ENCODE measurements at regions of chr2 and their contacts with region 1.

Region 1: DNA sequence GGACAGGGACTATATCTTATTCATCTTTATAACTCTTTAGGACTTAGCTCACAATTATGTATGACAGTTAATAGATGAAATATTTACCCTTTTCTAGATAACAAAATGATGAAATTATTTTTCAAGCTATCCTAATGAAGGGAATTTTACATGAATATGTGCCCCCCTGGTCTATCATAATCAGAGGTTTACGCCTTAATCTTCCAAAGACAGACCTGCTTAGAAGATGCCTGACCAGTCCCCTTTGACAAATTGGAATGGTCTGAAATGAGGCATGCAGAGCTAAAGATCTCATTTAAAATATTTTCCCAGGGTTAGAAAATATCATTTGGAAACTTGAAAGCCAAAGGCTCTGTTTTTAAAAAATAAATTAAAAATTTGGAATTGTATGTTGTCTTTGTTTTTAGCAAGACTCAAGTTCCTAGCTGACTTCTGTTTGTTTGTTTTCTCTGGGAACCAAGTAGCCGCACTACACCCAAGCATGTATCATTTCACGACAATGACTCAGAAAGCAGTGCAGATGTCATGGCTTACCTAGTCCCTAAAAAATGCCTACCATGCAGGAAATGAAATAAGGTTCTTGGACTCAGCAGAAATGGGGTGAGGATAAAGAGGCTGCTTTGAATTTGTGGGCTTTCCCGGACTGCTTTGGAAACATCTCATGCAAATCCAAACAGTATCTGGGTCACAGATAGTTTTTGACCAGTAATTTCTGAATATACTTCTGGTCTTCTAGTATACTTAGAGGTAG is 162.1 kb downstream of the ZEB2 start:
- DNase-seq: peak; percentile 51
- ATAC-seq: peak; percentile 84
- H3K4me3 Mint-ChIP-seq: no peak overlapping the region
- H3K27ac Mint-ChIP-seq: peak overlapping the region; percentile 66
- H3K4me1 Mint-ChIP-seq: peaks cover 18% of the 10 kb centered on the region
- H3K27me3 Mint-ChIP-seq: no peaks in the 10 kb centered on the region

Region 2: DNA sequence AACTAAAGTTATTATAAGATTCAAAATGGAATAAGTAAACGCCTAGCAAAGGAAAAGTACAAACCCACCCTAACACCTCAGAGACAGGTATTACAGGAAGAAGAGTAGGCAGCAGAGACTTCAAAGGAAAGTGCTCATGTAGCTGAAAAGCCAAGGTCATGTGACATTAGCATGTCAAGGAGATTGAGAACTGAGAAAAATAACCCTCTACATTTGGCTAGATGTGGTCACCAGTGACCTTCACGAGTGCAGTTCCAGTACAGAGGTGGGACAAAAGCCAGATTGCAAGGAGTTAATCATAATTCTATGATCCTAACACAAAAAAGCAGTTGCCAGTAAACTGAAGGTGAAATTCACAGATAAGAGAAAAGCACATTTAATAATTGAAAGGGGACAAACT is 90.6 kb before region 1 on chr2:
- CTCF ChIA-PET with region 1: no interaction called
- POLR2A ChIA-PET with region 1: no interaction called
- intact Hi-C with region 1: no loop called
- DNase-seq: peak; percentile 13
- ATAC-seq: peak; percentile 70
- H3K4me3 Mint-ChIP-seq: no peak overlapping the region
- H3K27ac Mint-ChIP-seq: peak overlapping the region; percentile 35
- H3K4me1 Mint-ChIP-seq: peaks cover 24% of the 10 kb centered on the region
- H3K27me3 Mint-ChIP-seq: no peaks in the 10 kb centered on the region

Region 3: DNA sequence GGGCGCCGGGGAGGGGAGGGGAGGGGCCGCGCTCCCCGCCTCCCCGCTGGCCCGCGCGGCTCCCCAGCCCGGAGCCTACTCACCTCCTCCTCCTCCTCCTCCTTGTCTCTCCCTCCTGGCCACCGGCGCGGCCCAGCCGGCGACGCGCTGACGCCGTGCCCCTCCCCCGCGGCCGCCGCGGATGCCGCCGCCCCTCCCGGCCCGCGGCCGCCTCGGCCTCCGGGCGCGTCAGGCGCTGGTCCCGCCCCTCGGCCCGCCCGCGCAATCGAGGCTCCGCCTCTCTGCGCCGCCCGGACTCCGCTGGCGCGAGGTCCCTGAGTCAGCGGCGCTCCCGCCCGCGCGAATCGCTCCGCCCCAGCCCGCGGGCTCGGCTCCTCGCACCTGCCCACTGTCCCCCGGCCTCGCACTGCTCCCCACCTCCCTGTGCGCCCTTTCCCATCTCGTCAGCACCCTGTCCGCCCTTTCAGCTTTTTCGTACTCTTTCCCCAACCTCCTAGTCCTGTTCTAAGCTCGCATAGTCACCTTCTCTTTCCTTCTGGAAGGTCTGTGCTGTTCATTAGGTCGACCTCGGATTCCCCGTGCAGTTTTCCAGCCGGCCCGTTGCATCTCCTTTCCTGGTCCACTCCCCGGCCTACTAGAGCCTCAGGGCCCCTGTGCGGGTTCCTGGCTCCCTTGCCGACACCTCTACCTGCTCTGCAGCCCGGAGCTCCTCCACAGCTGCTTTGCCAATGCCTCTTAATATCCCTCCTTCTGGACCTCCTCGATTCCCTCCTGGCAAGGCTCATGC is 25.2 kb before region 1 on chr2:
- CTCF ChIA-PET with region 1: no interaction called
- POLR2A ChIA-PET with region 1: no interaction called
- intact Hi-C with region 1: loop called in 1 of 2 experiments (anchors 1 kb)
- DNase-seq: peak; percentile 94
- ATAC-seq: peak; percentile 88
- H3K4me3 Mint-ChIP-seq: peak overlapping the region; percentile 93
- H3K27ac Mint-ChIP-seq: peak overlapping the region; percentile 88
- H3K4me1 Mint-ChIP-seq: peaks cover 32% of the 10 kb centered on the region
- H3K27me3 Mint-ChIP-seq: peaks cover 2% of the 10 kb centered on the region

Region 4: DNA sequence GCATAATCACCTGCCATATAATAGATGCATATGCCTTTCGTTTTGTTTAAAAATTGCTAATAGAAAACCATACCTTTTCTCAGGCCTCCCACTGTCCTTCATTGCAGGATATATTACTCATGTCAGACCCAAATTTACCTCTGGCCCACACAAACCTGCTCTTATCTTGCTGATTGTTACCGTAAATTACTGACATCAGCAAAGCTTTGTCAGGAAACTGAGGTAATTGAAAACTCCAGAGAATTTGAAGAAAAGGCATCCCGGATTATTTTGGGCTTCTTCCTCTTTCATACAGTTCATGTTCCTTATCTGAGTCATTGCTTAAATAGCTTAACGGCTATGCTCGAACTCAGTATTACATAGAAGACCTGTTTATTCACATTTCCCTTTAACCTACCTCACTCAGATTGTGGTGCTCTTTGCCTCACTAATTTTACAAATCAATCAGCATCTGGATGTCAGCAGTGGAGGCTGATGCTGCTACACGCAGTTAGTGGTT is 16.4 kb after region 1 on chr2:
- CTCF ChIA-PET with region 1: interaction called, 4 read pairs
- POLR2A ChIA-PET with region 1: no interaction called
- intact Hi-C with region 1: loop called in 1 of 2 experiments (anchors 2 kb)
- DNase-seq: no peak
- ATAC-seq: peak; percentile 74
- H3K4me3 Mint-ChIP-seq: no peak overlapping the region
- H3K27ac Mint-ChIP-seq: peak overlapping the region; percentile 35
- H3K4me1 Mint-ChIP-seq: peaks cover 34% of the 10 kb centered on the region
- H3K27me3 Mint-ChIP-seq: peaks cover 10% of the 10 kb centered on the region

Region 5: GRCh38 chr2:144493027-144493809 is 135.4 kb after region 1 on chr2:
- CTCF ChIA-PET with region 1: no interaction called
- POLR2A ChIA-PET with region 1: no interaction called
- intact Hi-C with region 1: loop called in 1 of 2 experiments (anchors 10 kb)
- DNase-seq: peak; percentile 21
- ATAC-seq: peak; percentile 77
- H3K4me3 Mint-ChIP-seq: no peak overlapping the region
- H3K27ac Mint-ChIP-seq: peak overlapping the region; percentile 76
- H3K4me1 Mint-ChIP-seq: peaks cover 23% of the 10 kb centered on the region
- H3K27me3 Mint-ChIP-seq: no peaks in the 10 kb centered on the region

Region 6: DNA sequence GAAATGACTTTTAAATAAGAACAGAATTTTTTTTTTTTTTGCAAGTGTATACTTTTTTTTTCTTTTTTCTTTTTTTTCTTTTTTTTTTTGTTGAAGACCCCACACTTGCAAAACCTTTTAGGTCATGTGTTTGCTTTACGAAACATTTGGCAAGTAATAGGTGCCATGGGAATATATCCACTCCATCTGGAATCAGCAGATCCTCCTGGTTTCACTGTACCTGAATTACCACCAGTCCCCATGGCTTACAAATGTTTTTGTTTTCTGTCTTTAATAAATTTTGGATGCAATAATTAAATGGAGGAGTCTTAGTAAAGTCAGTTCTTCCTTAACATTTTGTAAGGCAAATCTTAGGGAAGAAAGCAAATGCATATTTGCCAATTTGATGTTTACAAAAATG is 721.8 kb after region 1 on chr2:
- CTCF ChIA-PET with region 1: no interaction called
- POLR2A ChIA-PET with region 1: no interaction called
- intact Hi-C with region 1: no loop called
- DNase-seq: no peak
- ATAC-seq: no peak
- H3K4me3 Mint-ChIP-seq: no peak overlapping the region
- H3K27ac Mint-ChIP-seq: no peak overlapping the region
- H3K4me1 Mint-ChIP-seq: no peaks in the 10 kb centered on the region
- H3K27me3 Mint-ChIP-seq: peaks cover 2% of the 10 kb centered on the region